PC-3 (cell line): ENCODE measurements at regions of chr19 and their contacts with region 1.

Region 1: DNA sequence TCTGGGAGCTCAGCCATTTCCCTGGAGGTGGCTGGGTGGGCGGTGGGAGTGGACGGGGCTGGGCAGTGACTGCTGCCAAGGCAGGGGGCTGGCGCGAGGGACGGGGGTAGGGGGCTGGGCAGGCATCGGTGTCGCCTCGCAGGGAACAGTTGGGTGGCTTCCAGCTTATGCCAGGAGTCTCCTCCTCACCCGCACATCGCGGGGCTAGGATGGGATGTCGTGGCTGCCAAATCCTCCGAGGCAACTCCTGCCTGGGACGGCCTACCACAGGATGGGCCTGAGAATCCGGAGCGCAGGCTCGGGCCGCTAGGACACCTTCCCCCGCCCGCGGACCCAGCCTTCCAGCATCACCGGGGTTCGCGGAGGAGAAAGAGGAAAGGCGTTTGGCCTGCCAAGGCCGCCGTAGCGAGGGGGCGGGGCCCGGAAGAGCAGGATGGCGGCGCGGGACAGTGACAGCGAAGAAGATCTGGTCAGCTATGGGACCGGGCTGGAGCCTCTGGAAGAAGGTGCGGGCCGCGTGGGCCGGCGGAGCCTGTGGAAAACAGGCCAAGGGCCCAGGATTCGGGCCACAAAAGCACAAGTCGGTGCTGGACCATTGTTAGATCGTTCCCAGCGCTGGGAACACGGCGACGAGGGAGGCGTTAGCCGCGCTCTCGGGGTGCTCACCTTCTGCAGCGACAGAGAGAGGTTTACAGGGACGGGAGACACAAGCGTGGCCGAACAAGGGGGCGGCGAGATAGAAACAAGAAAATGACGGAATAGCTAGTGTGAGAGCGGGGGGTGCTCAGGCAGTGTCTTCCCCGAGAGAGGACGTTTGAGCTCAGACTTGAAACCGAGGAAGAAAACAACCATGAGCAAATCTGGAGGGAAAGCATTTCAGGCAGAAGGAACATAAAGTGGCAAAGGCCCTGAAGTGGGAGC is at the start of gene GPATCH1:
- DNase-seq: peak; percentile 82
- ATAC-seq: peak; percentile 83
- H3K4me3 ChIP-seq: peak within 1 kb of the TSS; percentile 100
- H3K27ac ChIP-seq: peak within 1 kb of the TSS; percentile 55
- H3K4me1 ChIP-seq: peaks cover 21% of the 10 kb centered on the region
- H3K27me3 ChIP-seq: no peaks in the 10 kb centered on the region
- CTCF ChIP-seq: no peak
- total RNA-seq, gene GPATCH1: 3.9 and 6.9 TPM in 2 replicates

Region 2: DNA sequence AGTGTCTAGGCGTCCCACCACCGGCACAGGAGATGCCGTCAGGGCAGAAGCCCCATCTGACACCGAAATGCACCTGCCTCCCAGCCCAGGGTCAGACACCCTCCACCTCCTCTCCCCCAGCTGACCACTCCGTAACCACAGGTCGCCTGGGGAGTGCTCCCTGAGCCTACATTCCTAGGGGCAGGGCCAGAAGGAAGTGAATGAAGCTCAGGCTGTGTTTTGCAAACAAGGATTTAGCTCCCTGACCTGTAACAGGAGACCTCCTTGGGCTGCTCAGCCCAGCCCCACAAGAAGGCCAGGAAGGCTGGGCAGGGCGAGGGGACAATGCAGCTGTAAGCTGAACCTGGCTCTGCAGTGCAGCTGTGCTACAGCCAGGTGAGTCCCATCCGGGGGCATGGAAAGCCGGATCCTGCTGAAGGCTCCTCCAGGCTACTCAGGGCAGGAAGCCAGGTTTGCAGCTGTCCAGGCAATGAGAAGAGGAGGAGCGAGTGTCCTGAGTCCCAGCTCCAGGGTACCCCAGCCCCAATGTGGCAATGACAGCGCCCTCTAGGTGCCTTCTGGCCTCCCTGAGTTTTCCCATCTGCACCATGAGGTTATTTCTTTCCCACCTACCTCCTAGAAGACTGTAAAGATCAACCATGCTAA is 58.4 kb before region 1 on chr19:
- CTCF ChIA-PET with region 1: no interaction called
- POLR2A ChIA-PET with region 1: no interaction called
- intact Hi-C with region 1: no loop called
- DNase-seq: no peak
- ATAC-seq: no peak
- H3K4me3 ChIP-seq: no peak overlapping the region
- H3K27ac ChIP-seq: no peak overlapping the region
- H3K4me1 ChIP-seq: no peaks in the 10 kb centered on the region
- H3K27me3 ChIP-seq: no peaks in the 10 kb centered on the region
- CTCF ChIP-seq: 0 out of 2 replicates have a peak, but pooled peaks have one; percentile 28

Region 3: DNA sequence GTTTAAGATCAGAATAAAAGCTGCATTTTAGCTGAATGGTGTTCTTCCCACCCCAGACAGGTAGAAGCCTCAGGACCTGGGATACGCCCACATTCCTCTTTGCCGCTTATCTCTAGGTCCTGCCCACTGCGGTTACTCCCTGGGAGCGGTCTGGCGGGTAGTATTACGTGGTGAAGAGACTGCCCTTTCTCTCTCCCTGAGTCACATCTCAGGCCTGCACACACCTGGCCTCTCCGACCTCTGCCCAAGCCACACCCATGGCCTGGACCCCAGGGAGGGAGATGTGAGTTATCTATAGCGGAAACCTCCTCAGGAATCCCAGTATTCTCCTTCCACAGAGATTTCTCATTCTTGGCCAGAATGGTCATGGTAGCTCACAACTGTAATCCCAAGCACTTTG is 33.6 kb before region 1 on chr19:
- CTCF ChIA-PET with region 1: no interaction called
- POLR2A ChIA-PET with region 1: no interaction called
- intact Hi-C with region 1: loop called (anchors 2 kb)
- DNase-seq: peak; percentile 95
- ATAC-seq: peak; percentile 95
- H3K4me3 ChIP-seq: peak overlapping the region; percentile 29; the same call in 1 of the 2 replicates
- H3K27ac ChIP-seq: peak overlapping the region; percentile 92
- H3K4me1 ChIP-seq: peaks cover 66% of the 10 kb centered on the region
- H3K27me3 ChIP-seq: no peaks in the 10 kb centered on the region
- CTCF ChIP-seq: no peak